Posterior vena cava (tissue), 2 donors: ENCODE measurements at regions of chr1 and their contacts with region 1.

Region 1: GRCh38 chr1:78565393-78565792 is 54.9 kb upstream of the IFI44L start:
- DNase-seq: no peak

Region 2: DNA sequence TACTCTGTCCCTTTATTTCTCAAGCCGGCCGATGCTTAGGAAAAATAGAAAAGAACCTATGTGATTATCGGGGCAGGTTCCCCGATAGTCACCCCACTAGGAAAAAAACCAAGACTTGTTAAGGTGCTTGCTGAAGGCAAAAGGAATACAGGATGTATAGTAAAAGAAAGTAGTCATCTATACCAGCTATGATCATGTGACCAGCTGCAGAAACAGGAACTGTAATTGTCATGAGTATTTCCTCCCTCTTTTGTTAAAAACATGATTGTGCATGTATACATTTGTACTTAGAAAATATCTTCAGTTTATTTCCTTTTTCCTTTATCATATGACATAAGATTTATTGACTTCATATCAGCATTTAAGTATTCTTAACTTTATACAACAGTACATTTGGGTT is 1376.6 kb before region 1 on chr1:
- intact Hi-C with region 1: loop called in 1 of 2 experiments (anchors 5 kb)
- DNase-seq: no peak

Region 3: GRCh38 chr1:77382366-77382765 is 1183.0 kb before region 1 on chr1:
- intact Hi-C with region 1: no loop called
- DNase-seq: no peak

Region 4: GRCh38 chr1:78760858-78761257 is 195.5 kb after region 1 on chr1:
- intact Hi-C with region 1: no loop called
- DNase-seq: no peak